ENCODE measurements at regions of chr2 and their contacts with region 1.

Region 1: DNA sequence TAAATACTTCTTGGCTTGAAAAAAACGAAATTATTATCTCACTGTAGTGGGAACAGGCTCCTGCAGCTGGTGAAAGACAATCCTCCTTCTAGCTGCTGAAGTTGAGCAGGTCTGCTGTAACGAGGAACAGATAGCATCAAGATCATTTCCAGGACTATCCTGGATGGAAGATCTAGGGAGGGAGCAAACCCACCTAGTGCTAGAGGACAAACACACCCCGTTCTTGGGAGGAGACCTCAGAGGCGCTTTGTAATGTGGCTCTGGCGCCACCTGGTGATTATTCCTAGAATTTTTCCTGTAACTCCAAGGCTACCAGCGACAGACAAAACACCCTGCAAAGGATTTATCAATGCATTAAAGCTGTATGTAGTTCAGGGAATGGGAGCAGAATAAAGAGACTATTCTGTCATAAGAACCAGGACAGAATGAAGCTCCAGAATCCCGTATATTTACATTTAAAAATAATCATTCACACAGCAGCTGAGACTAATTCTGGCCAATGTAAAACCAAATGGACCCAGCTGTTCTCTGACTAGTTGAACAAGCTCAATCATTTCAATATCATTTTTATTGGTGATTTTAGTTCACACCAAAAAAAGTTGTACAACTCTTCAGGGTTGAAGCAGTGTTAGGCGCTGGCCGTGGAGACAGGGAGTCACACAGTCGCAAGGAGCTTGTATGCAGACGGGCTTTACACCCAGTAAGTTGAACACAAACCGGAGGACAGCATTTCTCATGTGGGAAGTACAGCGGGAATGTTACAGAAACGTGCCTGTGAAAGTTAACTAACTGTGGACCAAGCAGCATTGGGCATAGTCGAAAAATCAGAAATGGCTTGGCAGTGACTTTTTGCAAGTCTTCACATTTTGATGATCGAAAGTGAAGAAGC is 290.3 kb downstream of the TRIB2 start:
- DNase-seq: no peak

Region 2: GRCh38 chr2:11850082-11850481 is 1157.0 kb before region 1 on chr2:
- intact Hi-C with region 1: loop called in 1 of 2 experiments (anchors 10 kb)
- DNase-seq: no peak